ENCODE measurements at regions of chr12 and their contacts with region 1.

Region 1: GRCh38 chr12:94101738-94102660 is 46.4 kb upstream of the PLXNC1 start:
- DNase-seq: peak; percentile 69 to 75
- H3K4me3 ChIP-seq: peak overlapping the region; percentile 59; the same call in 1 of the 2 replicates
- H3K27ac ChIP-seq: no peak overlapping the region
- H3K4me1 ChIP-seq: peaks cover 41% of the 10 kb centered on the region
- H3K27me3 ChIP-seq: no peaks in the 10 kb centered on the region
- CTCF ChIP-seq: peak; percentile 78

Region 2: DNA sequence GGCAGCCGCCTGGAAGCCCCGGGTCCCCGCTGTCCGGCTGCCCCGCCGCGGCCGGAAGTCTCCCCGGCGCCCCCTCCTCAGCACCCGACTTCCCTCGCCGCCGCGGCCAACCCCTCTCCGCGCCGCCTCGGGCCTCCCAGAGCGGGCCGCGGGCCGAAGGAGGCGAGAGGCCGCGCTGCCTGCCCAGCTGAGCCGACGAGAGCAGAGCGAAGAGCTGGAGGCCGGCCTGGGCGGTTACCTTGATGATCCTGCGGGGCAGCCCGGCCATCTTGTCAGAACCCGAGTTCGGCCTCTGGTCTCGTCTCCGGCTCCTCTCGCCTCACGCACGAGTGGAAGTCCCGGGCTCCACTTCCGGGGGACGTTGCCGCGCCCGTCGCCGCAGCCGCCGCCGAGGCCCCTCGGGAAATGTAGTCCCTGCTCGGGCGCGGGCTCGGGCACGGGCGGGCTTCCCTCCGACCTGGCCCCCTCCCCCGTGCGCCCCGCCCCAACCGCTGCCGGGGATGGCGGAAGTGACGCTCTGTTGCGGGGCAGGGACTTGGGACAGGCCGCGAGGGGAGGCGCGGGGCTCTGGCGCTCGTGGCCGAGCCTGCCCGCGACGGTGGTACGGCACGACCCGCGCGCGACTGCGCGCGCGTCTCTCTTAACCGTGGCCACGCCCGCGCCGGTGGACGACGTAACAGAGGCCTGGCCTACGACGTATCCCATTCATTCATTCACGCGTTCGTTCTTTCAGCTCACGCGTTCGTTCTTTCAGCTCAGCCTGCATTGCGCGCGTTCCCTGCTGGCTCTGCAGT is 660.2 kb before region 1 on chr12 and contains the start of gene UBE2N:
- CTCF ChIA-PET with region 1: no interaction called
- POLR2A ChIA-PET with region 1: no interaction called
- intact Hi-C with region 1: loop called (anchors 1 kb)
- DNase-seq: peak; percentile 85 to 95
- H3K4me3 ChIP-seq: peak within 1 kb of the TSS; percentile 73
- H3K27ac ChIP-seq: peak within 1 kb of the TSS; percentile 83
- H3K4me1 ChIP-seq: peaks cover 31% of the 10 kb centered on the region
- H3K27me3 ChIP-seq: no peaks in the 10 kb centered on the region
- CTCF ChIP-seq: no peak
- total RNA-seq, gene UBE2N: 68.5 and 82.1 TPM in 2 replicates

Region 3: DNA sequence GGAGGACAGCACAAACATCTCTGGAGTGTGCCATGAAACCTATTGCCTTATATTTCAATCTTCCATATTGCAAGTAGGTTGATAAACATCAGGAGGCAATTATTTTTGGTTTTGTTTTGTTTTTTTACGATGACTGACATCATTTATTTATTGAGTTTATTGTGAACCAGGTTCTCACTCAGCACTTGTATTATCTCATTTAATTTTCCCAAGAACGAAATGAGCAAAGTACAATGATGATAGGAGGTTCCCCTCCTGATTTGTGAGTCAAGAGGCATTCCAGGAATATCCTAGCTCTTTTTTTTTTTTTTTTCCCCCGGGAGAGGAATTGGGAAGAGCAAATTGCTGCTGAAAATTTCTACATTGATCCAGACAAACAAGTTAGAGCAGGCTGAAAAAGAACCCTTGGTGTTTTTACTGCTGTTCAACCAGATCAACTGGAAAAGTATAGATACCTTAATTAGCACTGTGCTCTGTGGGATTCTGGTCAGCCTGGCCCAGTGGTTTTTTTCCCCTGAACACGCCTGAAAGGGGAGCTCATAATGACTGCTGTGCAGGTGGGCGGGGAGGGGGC is 524.7 kb before region 1 on chr12:
- CTCF ChIA-PET with region 1: no interaction called
- POLR2A ChIA-PET with region 1: no interaction called
- intact Hi-C with region 1: no loop called
- DNase-seq: no peak
- H3K4me3 ChIP-seq: no peak overlapping the region
- H3K27ac ChIP-seq: no peak overlapping the region
- H3K4me1 ChIP-seq: no peaks in the 10 kb centered on the region
- H3K27me3 ChIP-seq: no peaks in the 10 kb centered on the region
- CTCF ChIP-seq: no peak

Region 4: DNA sequence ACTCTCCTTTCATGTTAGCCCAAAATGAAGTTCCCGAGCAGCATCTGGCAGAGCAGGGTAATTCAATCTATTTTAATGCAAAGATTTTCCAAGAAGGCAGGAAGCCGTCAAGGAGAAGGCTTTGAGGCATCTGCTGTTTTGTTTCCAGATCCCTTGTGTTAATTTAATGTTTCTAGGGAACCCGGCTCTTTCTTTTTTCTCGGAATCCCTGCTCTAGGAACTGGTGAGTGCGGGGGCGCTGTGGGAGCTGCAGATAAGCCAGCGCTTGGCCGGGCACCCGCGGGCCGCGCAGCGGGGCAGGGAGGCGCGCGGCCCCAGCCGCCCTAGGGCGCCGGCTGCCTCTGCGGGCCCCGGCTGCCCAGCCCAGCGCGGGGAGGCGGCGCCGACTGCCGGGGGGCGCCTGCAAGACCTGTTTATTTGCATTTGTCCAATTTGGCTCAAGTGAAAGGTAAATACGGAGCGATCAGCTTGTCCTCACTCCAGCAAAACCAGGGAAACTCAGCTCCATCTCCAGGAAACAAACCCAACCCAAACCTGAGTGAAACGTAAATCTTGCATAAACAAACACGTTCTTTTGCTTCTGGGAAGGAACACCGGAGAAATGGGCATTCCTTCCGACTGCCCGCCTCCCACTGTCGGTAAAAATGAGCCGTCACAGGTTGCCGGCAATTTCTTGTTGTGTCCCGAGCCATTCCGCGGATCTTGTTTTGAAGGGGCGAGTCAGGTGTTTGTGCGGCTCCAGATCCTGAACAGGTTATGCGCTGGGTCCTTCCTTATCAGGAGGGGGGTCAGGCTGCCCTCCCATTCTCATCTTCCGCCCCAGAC is 359.7 kb before region 1 on chr12:
- CTCF ChIA-PET with region 1: interaction called, 8 read pairs
- POLR2A ChIA-PET with region 1: no interaction called
- intact Hi-C with region 1: loop called (anchors 1 kb)
- DNase-seq: peak; percentile 72 to 73
- H3K4me3 ChIP-seq: peak overlapping the region; percentile 71
- H3K27ac ChIP-seq: peak overlapping the region; percentile 53
- H3K4me1 ChIP-seq: peaks cover 18% of the 10 kb centered on the region
- H3K27me3 ChIP-seq: no peaks in the 10 kb centered on the region
- CTCF ChIP-seq: peak; percentile 46; the same call in 1 of the 2 replicates

Region 5: GRCh38 chr12:93785262-93786010 is 316.6 kb before region 1 on chr12:
- CTCF ChIA-PET with region 1: no interaction called
- POLR2A ChIA-PET with region 1: no interaction called
- intact Hi-C with region 1: loop called (anchors 1 kb)
- DNase-seq: peak; percentile 73 to 96
- H3K4me3 ChIP-seq: peak overlapping the region; percentile 40; the same call in 1 of the 2 replicates
- H3K27ac ChIP-seq: peak overlapping the region; percentile 93
- H3K4me1 ChIP-seq: peaks cover 58% of the 10 kb centered on the region
- H3K27me3 ChIP-seq: no peaks in the 10 kb centered on the region
- CTCF ChIP-seq: no peak